ENCODE measurements at regions of chr7 and their contacts with region 1.

Region 1: DNA sequence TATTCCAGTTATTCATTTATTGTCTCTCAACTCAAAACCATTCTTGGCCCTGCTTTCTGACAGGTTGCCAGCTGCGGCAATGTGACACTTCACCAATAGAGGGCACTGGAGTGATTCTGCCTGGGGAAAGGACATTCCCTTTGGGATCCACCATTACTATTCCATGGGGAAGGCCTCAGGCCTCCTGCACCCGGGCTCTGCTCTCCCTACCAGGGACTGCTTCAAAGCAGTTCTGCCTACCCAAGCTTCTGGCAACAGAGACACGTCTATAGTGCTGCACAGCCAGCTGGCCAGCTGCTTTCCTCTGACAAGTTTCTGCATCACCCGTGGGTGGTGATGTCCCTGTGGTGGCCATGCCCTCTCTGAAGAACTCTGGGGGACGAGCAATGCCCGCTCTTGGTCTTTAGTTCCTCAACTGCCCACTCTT is 163.8 kb downstream of the ELMO1 start:
- DNase-seq: peak in 7 of 9 donors; percentile 15 to 38 (median 24)
- ATAC-seq: peak; percentile 59
- H3K4me3 ChIP-seq: no peak overlapping the region
- H3K4me3 Mint-ChIP-seq: no peak overlapping the region
- H3K27ac ChIP-seq: no peak overlapping the region
- H3K27ac Mint-ChIP-seq: peak overlapping the region in 5 of 9 donors; percentile 8 to 76 (median 26)
- H3K4me1 ChIP-seq: peaks cover 8 to 18% of the 10 kb centered on the region in 2 donors
- H3K4me1 Mint-ChIP-seq: peaks cover 38 to 80% (median 61%) of the 10 kb centered on the region in 7 donors
- H3K27me3 ChIP-seq: no peaks in the 10 kb centered on the region
- H3K27me3 Mint-ChIP-seq: no peaks in the 10 kb centered on the region

Region 2: GRCh38 chr7:37295401-37295800 is 10.6 kb after region 1 on chr7:
- CTCF ChIA-PET with region 1: interaction called, 12 read pairs
- POLR2A ChIA-PET with region 1: interaction called, 7 read pairs
- intact Hi-C with region 1: no loop called
- DNase-seq: no peak
- ATAC-seq: no peak
- H3K4me3 ChIP-seq: no peak overlapping the region
- H3K4me3 Mint-ChIP-seq: no peak overlapping the region
- H3K27ac ChIP-seq: no peak overlapping the region
- H3K27ac Mint-ChIP-seq: peak overlapping the region in 6 of 9 donors; percentile 0 to 86 (median 40)
- H3K4me1 ChIP-seq: no peaks in the 10 kb centered on the region
- H3K4me1 Mint-ChIP-seq: peaks cover 0 to 24% (median 14%) of the 10 kb centered on the region in 7 donors
- H3K27me3 ChIP-seq: no peaks in the 10 kb centered on the region
- H3K27me3 Mint-ChIP-seq: no peaks in the 10 kb centered on the region

Region 3: GRCh38 chr7:37311355-37311754 is 26.5 kb after region 1 on chr7:
- CTCF ChIA-PET with region 1: interaction called, 5 read pairs
- POLR2A ChIA-PET with region 1: interaction called, 5 read pairs
- intact Hi-C with region 1: loop called in 1 of 2 experiments (anchors 2 kb)
- DNase-seq: peak in 5 of 9 donors; percentile 27 to 36 (median 34)
- ATAC-seq: peak; percentile 61
- H3K4me3 ChIP-seq: no peak overlapping the region
- H3K4me3 Mint-ChIP-seq: peak overlapping the region in 7 of 10 donors; percentile 52 to 88 (median 66)
- H3K27ac ChIP-seq: peak overlapping the region; percentile 38
- H3K27ac Mint-ChIP-seq: peak overlapping the region in 7 of 9 donors; percentile 79 to 98 (median 97)
- H3K4me1 ChIP-seq: peaks cover 26 to 52% of the 10 kb centered on the region in 2 donors
- H3K4me1 Mint-ChIP-seq: peaks cover 50 to 85% (median 68%) of the 10 kb centered on the region in 7 donors
- H3K27me3 ChIP-seq: no peaks in the 10 kb centered on the region
- H3K27me3 Mint-ChIP-seq: no peaks in the 10 kb centered on the region

Region 4: DNA sequence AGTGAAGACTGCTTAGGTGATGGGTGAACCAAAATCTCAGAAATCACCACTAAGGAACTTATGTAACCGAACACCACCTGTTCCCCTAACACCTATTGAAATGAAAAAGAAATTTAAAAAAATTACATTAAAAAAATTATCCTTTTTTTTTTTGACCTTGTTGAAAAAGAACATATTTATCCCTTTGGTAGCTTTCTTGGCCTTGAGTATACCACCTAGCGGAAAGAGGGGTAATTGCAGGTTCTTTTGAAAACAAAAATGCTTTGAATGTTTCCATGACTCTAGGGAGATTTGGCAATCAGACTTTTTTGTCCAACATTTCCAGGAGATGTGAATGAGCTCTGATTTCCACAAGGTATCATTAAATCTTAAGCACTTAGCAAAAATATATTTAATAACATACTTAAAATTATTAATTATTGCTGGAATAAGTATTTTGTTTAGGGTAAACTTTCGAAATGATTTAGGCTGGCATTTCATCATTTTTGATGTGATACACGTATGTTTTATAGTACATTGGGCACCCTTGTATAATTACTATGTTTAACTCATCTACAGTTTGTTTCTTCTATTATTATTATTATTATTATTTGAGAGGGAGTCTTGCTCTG is 210.9 kb after region 1 on chr7:
- CTCF ChIA-PET with region 1: interaction called, 5 read pairs
- POLR2A ChIA-PET with region 1: no interaction called
- intact Hi-C with region 1: loop called (anchors 1 kb)
- DNase-seq: peak in 6 of 9 donors; percentile 16 to 46 (median 36)
- ATAC-seq: peak; percentile 60
- H3K4me3 ChIP-seq: no peak overlapping the region
- H3K4me3 Mint-ChIP-seq: no peak overlapping the region
- H3K27ac ChIP-seq: no peak overlapping the region
- H3K27ac Mint-ChIP-seq: no peak overlapping the region
- H3K4me1 ChIP-seq: no peaks in the 10 kb centered on the region
- H3K4me1 Mint-ChIP-seq: peaks cover 0 to 6% (median 0%) of the 10 kb centered on the region in 7 donors
- H3K27me3 ChIP-seq: no peaks in the 10 kb centered on the region
- H3K27me3 Mint-ChIP-seq: no peaks in the 10 kb centered on the region

Region 5: GRCh38 chr7:37510043-37510634 is 225.3 kb after region 1 on chr7:
- CTCF ChIA-PET with region 1: interaction called, 4 read pairs
- POLR2A ChIA-PET with region 1: interaction called, 3 read pairs
- intact Hi-C with region 1: loop called in 1 of 2 experiments (anchors 1 kb)
- DNase-seq: peak in 6 of 9 donors; percentile 10 to 41 (median 34)
- ATAC-seq: peak; percentile 69
- H3K4me3 ChIP-seq: no peak overlapping the region
- H3K4me3 Mint-ChIP-seq: no peak overlapping the region
- H3K27ac ChIP-seq: no peak overlapping the region
- H3K27ac Mint-ChIP-seq: no peak overlapping the region
- H3K4me1 ChIP-seq: no peaks in the 10 kb centered on the region
- H3K4me1 Mint-ChIP-seq: no peaks in the 10 kb centered on the region
- H3K27me3 ChIP-seq: no peaks in the 10 kb centered on the region
- H3K27me3 Mint-ChIP-seq: peaks cover 0 to 49% (median 16%) of the 10 kb centered on the region in 5 donors

Measured in naive thymus-derived CD4-positive, alpha-beta T cell (primary cell).